PC-3 (cell line): ENCODE measurements at regions of chr20 and their contacts with region 1.

Region 1: DNA sequence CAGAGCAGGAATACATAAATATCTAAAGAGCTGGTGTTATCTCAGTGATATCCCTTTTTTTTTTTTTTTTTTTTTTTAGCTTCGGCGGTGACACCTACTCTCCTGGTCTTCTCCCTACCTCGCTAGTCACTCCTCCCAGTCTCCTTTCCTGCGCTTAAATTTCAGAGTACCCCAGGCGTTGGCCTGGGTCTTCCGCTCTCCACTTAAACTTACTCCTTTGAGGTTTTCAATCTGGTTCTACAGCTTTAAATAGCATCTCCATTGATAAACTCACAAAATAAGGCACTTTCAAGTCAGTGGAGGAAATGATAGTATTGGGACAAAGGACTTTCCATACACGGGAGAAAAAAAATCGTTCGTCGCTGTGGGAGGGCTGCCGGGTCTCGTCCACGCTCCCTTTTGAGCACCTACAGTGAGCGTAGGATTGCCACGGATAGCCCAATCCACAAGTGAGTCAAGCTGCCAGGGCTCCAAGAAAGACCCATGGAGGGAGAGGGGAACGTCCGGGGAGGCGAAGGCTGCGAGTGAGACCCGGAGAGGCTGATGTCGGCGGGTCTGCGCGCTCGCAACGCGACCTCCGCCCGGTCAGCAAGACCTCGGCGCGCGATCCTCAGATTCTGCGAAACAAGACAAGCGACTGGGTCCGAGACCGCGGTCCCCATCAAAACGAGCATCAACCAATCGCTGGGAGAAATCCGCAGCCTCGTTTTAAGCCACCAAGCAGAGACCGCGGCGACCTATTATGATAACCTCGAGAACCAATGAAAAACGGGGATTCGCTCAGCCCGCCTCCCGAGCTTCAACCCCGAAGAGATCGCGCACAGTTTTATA is 672 bp upstream of the SRSF6 start:
- DNase-seq: peak; percentile 89
- ATAC-seq: peak; percentile 88
- H3K4me3 ChIP-seq: peak overlapping the region; percentile 99
- H3K27ac ChIP-seq: peak overlapping the region; percentile 89
- H3K4me1 ChIP-seq: peaks cover 9% of the 10 kb centered on the region
- H3K27me3 ChIP-seq: no peaks in the 10 kb centered on the region
- CTCF ChIP-seq: no peak

Region 2: GRCh38 chr20:43514062-43514999 is 57.3 kb after region 1 on chr20:
- CTCF ChIA-PET with region 1: no interaction called
- POLR2A ChIA-PET with region 1: interaction called, 13 read pairs
- intact Hi-C with region 1: loop called (anchors 2 kb)
- DNase-seq: peak; percentile 99
- ATAC-seq: peak; percentile 88
- H3K4me3 ChIP-seq: peak overlapping the region; percentile 78
- H3K27ac ChIP-seq: 0 out of 2 replicates have a peak overlapping the region, but pooled peaks have one; percentile 7
- H3K4me1 ChIP-seq: peaks cover 16% of the 10 kb centered on the region; the same call in 1 of the 2 replicates
- H3K27me3 ChIP-seq: no peaks in the 10 kb centered on the region
- CTCF ChIP-seq: peak; percentile 48; the same call in 1 of the 2 replicates

Region 3: GRCh38 chr20:43590392-43591323 is 133.6 kb after region 1 on chr20 and contains the start of gene IFT52:
- CTCF ChIA-PET with region 1: no interaction called
- POLR2A ChIA-PET with region 1: interaction called, 18 read pairs
- intact Hi-C with region 1: loop called (anchors 1 kb)
- DNase-seq: peak; percentile 97
- ATAC-seq: peak; percentile 99
- H3K4me3 ChIP-seq: peak within 1 kb of the TSS; percentile 93
- H3K27ac ChIP-seq: peak within 1 kb of the TSS; percentile 66
- H3K4me1 ChIP-seq: peaks cover 14% of the 10 kb centered on the region
- H3K27me3 ChIP-seq: no peaks in the 10 kb centered on the region
- CTCF ChIP-seq: no peak
- total RNA-seq, gene IFT52: 22.9 and 23.0 TPM in 2 replicates

Region 4: DNA sequence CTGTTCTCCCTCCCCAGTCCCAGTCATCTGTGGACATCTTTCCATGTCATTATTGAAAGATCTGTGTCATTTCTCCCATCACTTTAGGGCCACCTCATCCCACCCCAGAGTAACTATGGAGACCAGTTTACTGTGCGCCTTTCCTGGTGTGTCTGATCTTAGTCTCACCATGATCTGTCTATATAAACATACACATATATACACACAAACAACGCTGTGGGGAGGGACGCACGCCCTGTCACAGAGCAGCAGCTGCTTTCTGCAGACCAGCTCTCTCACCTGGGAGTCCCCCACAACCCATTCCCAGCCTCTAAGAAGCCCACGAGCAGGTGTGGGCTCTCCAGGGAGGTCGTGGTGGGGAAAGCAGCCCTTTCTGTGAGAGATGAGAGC is 389.5 kb after region 1 on chr20:
- CTCF ChIA-PET with region 1: no interaction called
- POLR2A ChIA-PET with region 1: interaction called, 19 read pairs
- intact Hi-C with region 1: no loop called
- DNase-seq: no peak
- ATAC-seq: peak; percentile 3; the same call in 1 of the 2 replicates
- H3K4me3 ChIP-seq: peak overlapping the region; percentile 38
- H3K27ac ChIP-seq: peak overlapping the region; percentile 93
- H3K4me1 ChIP-seq: peaks cover 68% of the 10 kb centered on the region
- H3K27me3 ChIP-seq: no peaks in the 10 kb centered on the region
- CTCF ChIP-seq: no peak